ENCODE measurements at regions of chr3 and their contacts with region 1.

Region 1: DNA sequence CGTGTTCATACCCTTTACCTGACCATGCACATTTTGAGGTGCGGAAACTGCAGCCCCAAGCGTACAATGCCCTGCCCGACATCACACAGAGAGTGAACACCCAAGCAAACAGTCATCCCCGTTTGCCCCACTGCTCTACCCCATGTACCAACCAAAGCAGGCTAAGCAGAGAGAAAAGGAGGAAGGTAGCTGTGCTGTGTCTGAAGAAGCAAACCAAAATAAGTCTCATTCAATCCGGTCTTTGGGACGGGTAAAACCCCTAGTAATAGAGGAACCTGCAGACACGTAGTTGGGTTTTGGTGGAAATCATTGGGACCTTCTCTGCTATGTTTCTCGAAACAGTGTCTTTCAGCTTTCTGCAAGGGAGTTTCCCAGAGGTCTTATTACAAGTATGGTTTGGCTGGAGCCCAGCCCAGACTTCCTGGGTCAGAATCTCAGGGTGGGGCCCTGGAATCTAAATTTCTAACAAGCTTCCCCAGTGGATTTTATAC is 164.6 kb upstream of the HES1 start:
- DNase-seq: peak; percentile 37
- ATAC-seq: peak; percentile 93
- H3K4me3 Mint-ChIP-seq: peak overlapping the region; percentile 77
- H3K27ac Mint-ChIP-seq: peak overlapping the region; percentile 91
- H3K4me1 Mint-ChIP-seq: peaks cover 29% of the 10 kb centered on the region
- H3K27me3 Mint-ChIP-seq: peaks cover 10% of the 10 kb centered on the region
- CTCF ChIP-seq: no peak

Region 2: DNA sequence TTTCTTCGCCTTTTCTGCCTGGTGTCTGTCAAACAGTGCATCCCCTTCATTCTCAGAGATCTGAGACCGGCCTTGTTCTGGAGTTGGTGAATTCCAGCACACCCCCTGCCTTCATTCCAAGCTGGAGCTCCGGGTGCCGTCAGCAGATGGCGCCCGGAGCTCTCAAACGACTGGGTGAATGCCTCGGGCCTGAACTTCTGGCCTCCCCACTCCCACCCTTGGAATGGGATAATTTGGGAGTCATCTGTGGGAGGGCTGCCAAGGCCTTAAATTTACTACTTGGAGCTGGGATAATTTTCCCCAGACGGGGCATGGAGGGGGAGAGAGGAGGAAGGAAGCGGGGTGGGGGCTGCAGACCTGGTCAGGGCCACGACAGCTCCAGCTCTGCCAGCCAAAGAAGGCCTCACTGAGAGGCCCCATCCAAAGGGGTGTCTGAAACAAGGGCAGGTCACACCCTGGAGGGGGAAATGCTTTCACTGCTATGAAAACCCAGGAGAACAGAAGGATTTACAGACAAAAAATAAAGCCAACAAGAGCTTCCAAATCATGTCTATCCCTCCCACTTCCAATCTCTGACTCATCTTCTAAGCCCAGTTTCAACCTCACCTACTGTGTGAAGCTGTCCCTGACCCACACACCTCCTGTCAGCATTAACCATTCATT is 190.4 kb before region 1 on chr3:
- CTCF ChIA-PET with region 1: interaction called, 9 read pairs
- POLR2A ChIA-PET with region 1: no interaction called
- intact Hi-C with region 1: loop called (anchors 2 kb)
- DNase-seq: no peak
- ATAC-seq: peak; percentile 42
- H3K4me3 Mint-ChIP-seq: no peak overlapping the region
- H3K27ac Mint-ChIP-seq: no peak overlapping the region
- H3K4me1 Mint-ChIP-seq: peaks cover 13% of the 10 kb centered on the region
- H3K27me3 Mint-ChIP-seq: peaks cover 34% of the 10 kb centered on the region
- CTCF ChIP-seq: no peak

Region 3: DNA sequence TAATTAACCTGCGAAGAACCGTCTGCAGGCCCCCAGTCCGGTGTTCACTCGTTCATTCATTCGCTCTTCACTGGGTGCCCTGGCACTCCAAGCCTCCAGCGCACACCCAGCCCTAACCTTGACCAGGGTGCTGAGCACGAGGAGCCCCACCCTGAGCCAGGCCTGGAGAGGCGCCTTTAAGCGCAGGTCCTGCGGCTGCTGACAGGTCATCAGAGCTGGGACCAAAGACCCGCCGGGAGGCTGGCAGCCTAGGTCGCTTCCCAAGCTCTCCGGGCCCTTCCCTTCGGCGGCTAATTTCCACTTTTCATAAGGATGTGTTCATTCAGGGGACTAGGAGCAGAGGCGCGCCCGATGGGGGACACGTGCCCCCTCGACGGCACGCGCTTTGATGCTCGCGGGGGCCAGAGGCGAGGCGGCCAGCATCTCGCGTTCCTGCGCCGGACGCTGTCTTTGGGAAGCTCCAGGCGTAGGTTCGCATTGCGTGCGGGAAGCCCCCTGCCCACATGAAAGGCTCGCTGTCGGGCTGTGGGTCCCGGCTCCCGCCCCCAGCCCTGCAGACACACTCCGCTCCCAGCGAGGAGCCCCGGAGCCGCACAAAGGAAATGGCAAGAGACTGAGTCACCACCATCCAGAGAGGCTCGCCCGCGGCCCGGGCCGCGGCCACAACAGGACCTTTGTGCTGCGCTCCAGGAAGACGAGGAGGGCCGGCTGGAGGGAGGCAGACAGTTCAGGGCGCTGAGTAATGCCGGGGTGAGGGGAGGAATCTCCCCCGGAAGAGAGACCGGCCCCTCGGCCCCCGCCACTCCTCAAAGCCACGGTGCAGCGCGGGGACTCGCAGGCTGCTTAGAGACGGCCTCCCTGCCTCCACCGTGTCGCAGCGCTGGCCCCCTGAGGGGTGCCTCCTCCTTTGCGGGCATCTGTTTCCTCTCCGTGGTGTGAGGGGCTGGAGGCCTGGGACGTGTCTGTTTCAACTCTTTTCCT is 101.8 kb before region 1 on chr3:
- CTCF ChIA-PET with region 1: no interaction called
- POLR2A ChIA-PET with region 1: interaction called, 4 read pairs
- intact Hi-C with region 1: loop called (anchors 1 kb)
- DNase-seq: no peak
- ATAC-seq: peak; percentile 9
- H3K4me3 Mint-ChIP-seq: peak overlapping the region; percentile 71
- H3K27ac Mint-ChIP-seq: no peak overlapping the region
- H3K4me1 Mint-ChIP-seq: peaks cover 85% of the 10 kb centered on the region
- H3K27me3 Mint-ChIP-seq: no peaks in the 10 kb centered on the region
- CTCF ChIP-seq: no peak

Region 4: GRCh38 chr3:194046995-194047645 is 75.8 kb after region 1 on chr3:
- CTCF ChIA-PET with region 1: no interaction called
- POLR2A ChIA-PET with region 1: interaction called, 5 read pairs
- intact Hi-C with region 1: loop called (anchors 5 kb)
- DNase-seq: no peak
- ATAC-seq: peak; percentile 62
- H3K4me3 Mint-ChIP-seq: no peak overlapping the region
- H3K27ac Mint-ChIP-seq: peak overlapping the region; percentile 33
- H3K4me1 Mint-ChIP-seq: peaks cover 33% of the 10 kb centered on the region
- H3K27me3 Mint-ChIP-seq: no peaks in the 10 kb centered on the region
- CTCF ChIP-seq: no peak

Region 5: DNA sequence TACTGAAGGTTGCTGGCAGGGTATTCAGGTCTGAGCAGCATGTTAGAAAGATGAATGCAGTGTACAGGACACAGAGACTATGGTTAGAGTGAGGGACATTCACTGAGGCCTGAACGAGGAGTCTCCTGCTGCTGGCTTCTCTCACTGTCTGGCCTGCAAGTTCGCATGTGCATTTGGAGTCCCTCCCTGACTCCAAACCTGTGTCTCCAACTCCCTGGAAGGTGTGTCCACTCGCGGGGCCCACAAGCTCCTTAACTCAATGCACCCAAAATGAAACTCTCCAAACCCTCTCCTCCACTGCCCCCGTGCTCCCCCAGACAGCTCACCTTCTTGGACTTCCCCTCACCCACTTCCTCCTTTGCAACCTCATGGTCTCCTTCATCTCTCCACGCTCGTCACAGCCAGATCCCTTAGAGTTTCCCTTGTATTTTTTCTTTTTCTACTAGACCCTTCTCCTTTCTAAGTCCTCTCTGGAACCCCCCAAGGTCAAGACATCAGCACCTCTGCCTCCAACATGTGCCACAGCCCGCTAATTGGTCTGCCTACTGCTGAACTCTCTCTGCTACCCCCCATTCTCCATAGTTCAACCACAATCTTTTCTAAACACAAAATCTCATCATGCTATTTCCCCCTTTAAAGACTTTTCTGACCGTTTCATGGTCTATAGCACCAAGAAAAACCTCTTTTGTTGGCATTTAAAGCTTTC is 222.9 kb after region 1 on chr3:
- CTCF ChIA-PET with region 1: no interaction called
- POLR2A ChIA-PET with region 1: no interaction called
- intact Hi-C with region 1: loop called (anchors 2 kb)
- DNase-seq: peak; percentile 21
- ATAC-seq: peak; percentile 91
- H3K4me3 Mint-ChIP-seq: peak overlapping the region; percentile 29
- H3K27ac Mint-ChIP-seq: peak overlapping the region; percentile 74
- H3K4me1 Mint-ChIP-seq: peaks cover 34% of the 10 kb centered on the region
- H3K27me3 Mint-ChIP-seq: peaks cover 3% of the 10 kb centered on the region
- CTCF ChIP-seq: no peak

Region 6: GRCh38 chr3:194315088-194315964 is 344.0 kb after region 1 on chr3:
- CTCF ChIA-PET with region 1: interaction called, 5 read pairs
- POLR2A ChIA-PET with region 1: interaction called, 3 read pairs
- intact Hi-C with region 1: loop called (anchors 1 kb)
- DNase-seq: peak; percentile 86
- ATAC-seq: peak; percentile 88
- H3K4me3 Mint-ChIP-seq: peak overlapping the region; percentile 77
- H3K27ac Mint-ChIP-seq: no peak overlapping the region
- H3K4me1 Mint-ChIP-seq: peaks cover 28% of the 10 kb centered on the region
- H3K27me3 Mint-ChIP-seq: peaks cover 25% of the 10 kb centered on the region
- CTCF ChIP-seq: peak; percentile 96

Measured in activated B cell treated with CpG ODN at 0.5 μM for 24 hours (primary cell).